Body of pancreas (tissue), 4 donors: ENCODE measurements at regions of chr10 and their contacts with region 1.

Region 1: DNA sequence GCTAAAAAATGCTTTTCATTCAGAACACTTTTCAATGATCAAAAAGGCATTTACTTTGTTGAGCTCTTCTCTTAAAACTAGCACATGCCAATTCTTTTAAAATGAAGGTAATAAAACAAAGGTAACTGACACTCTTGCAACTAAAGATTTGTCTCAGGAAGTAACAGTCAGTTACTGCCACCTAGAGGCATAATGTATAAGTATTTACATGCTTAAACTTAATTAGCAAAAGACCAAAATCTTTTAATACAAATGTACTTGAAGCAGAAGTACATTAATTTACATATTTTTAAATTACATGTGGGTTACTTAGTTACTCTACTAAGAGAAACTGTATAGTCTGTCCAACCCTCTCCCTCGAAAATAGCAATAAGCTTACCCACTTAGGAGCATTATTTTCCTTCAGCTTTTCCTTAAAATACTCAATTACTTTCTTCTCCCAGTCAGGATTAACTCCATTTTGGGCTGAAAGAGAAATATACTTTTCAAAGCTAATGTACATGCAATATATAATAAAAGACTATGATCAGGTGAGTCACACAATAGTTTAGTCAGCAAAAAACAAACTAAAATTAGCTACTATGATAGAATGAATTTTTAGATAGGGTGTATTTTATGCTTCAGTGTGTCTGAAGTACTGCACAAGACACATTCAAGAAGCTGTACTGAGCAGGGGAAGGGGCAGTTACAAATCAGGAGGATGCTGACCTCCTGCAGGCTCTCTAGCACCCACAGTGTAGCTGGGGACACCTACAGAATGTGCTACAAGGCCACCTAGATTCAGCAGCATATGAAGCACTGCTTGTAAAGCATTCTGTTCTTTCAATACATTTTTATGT is 13.0 kb downstream of the MCMBP start:
- DNase-seq: no peak
- ATAC-seq: no peak
- H3K4me3 ChIP-seq: no peak overlapping the region
- H3K27ac ChIP-seq: no peak overlapping the region
- H3K4me1 ChIP-seq: peaks cover 5% of the 10 kb centered on the region
- H3K27me3 ChIP-seq: no peaks in the 10 kb centered on the region
- CTCF ChIP-seq: peak; percentile 46 to 68 (median 58)
- POLR2A ChIP-seq: no peak

Region 2: DNA sequence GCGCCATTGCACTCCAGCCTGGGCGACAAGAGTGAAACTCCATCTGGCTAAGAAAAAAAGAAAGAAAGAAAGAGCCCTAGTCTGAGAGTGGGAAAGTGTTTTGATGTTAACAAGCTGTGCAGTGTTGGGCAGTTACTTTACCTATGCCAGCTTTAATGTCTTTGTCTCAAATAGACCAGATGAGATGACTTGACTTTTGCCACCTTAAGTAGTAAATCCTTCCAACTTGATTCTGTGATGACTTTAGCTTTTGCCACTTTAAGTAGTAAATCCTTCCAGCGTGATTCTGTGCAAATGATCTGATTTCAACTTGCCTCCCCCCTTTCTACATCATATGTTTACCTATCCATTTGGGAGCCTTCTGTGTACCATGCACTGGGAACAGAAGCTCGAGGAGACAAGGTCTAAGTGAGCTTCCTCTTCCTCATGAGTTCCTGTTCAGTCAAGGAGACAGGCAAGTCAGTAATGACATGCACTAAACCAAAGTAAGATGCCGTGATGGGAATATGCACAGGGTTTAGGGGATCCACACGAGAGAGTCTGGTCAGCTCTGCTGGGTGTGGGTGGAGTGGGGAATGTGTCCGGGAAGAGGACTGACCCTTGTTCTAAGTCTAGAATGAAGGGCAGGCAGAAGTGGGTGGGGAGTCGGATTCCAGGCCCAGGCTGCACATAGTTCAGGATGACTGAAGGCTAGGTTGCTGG is 116.5 kb before region 1 on chr10:
- intact Hi-C with region 1: loop called (anchors 10 kb)
- DNase-seq: no peak
- ATAC-seq: no peak
- H3K4me3 ChIP-seq: no peak overlapping the region
- H3K27ac ChIP-seq: no peak overlapping the region
- H3K4me1 ChIP-seq: peaks cover 5% of the 10 kb centered on the region
- H3K27me3 ChIP-seq: no peaks in the 10 kb centered on the region
- CTCF ChIP-seq: no peak
- POLR2A ChIP-seq: no peak

Region 3: DNA sequence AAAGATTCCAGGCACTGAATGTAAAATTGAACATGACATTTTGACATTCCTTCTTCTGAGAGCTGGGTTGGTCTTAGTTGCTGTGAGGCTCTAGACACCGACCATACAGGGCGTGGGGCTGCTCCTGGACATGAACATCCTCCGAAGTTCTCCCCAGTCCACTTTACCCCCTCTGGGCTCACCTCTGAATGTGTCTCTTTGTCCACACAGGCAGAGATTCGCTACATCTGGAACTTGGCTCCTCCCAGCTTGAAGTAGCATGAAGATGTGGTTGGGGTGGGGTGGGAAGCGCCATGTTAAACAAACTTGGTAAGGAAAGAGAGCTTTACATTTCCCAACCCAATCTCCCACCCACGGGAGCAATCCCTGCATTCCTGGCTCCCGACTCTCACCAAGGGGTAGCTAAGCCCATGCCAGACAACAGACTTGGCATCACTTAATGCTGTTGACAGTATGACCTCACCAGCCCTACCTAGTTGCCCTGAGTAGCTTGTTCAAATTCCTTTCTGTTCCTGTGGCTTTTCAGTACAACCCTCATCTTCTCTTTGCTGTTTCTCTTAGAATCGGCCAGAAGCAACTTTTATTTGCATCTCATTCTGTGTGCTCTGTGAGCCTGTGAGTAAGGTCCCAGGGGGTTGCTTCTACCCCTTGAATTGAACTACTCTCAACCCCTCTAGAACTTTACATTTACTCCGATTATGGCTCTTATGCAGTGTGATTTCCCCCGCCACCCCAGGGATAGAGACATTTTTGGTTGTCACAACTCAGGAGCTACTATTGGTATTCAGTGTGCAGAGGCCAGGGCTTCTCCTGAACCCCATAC is 244.3 kb after region 1 on chr10:
- intact Hi-C with region 1: no loop called
- DNase-seq: no peak
- ATAC-seq: no peak
- H3K4me3 ChIP-seq: no peak overlapping the region
- H3K27ac ChIP-seq: no peak overlapping the region
- H3K4me1 ChIP-seq: no peaks in the 10 kb centered on the region
- H3K27me3 ChIP-seq: no peaks in the 10 kb centered on the region
- CTCF ChIP-seq: no peak
- POLR2A ChIP-seq: no peak